ENCODE measurements at regions of chr14 and their contacts with region 1.

Region 1: GRCh38 chr14:52552063-52552988 is at the starts of genes GPR137C and TXNDC16:
- DNase-seq: peak; percentile 94
- ATAC-seq: peak; percentile 91
- H3K4me3 Mint-ChIP-seq: peak within 1 kb of the TSS; percentile 91
- H3K27ac Mint-ChIP-seq: peak within 1 kb of the TSS; percentile 80
- H3K4me1 Mint-ChIP-seq: peaks cover 17% of the 10 kb centered on the region
- H3K27me3 Mint-ChIP-seq: peaks cover 2% of the 10 kb centered on the region
- CTCF ChIP-seq: no peak
- total RNA-seq, gene GPR137C: 0.05 and 0.16 TPM in 2 replicates
- total RNA-seq, gene TXNDC16: 1.9 and 3.9 TPM in 2 replicates

Region 2: DNA sequence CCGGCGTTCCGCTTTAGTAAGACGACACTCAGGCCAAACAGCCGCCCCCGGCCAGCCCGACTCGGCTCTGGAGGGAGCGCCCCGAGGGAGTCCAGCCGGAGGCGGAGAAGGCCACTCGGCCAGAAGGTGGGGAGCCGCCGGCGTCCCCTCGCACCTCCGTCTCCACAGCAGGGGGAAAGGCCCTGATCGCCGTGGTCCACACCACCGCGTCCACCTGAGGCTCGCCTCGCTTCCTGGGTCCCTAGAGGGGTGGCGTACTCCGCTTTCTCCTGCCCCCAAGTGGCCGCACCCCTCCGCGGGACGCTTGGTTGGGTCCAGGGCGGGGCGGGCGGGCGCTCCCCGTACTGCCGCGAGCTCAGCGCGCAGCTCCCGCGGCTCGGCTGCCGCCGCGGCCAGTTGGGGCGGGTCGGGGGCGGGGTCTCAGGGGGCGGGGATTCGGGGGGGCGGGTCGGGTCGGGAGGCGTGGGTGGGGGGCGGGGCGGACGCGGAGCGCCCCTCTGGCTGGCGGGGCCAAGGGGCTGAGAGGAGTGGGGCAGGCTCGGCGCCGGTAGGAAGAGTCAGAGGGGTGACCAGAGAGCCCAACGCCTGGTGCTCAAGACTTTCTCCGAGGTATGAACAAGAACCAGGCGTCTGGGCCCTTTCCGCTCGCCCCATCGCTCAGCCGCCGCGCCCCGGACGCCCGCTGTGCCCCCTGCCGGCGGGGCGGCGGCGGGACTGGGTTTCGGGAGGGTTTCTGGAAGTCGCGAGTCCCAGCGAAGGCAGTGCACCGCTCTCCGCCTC is 900.7 kb before region 1 on chr14 and contains the start of gene FRMD6:
- CTCF ChIA-PET with region 1: no interaction called
- POLR2A ChIA-PET with region 1: no interaction called
- intact Hi-C with region 1: loop called (anchors 1 kb)
- DNase-seq: peak; percentile 71
- ATAC-seq: peak; percentile 80
- H3K4me3 Mint-ChIP-seq: peak within 1 kb of the TSS; percentile 82
- H3K27ac Mint-ChIP-seq: peak within 1 kb of the TSS; percentile 35
- H3K4me1 Mint-ChIP-seq: peaks cover 8% of the 10 kb centered on the region
- H3K27me3 Mint-ChIP-seq: peaks cover 30% of the 10 kb centered on the region
- CTCF ChIP-seq: no peak
- total RNA-seq, gene FRMD6: 0.32 and 0.33 TPM in 2 replicates

Region 3: GRCh38 chr14:52299692-52300278 is 252.5 kb before region 1 on chr14:
- CTCF ChIA-PET with region 1: interaction called, 3 read pairs
- POLR2A ChIA-PET with region 1: no interaction called
- intact Hi-C with region 1: loop called (anchors 1 kb)
- DNase-seq: no peak
- ATAC-seq: no peak
- H3K4me3 Mint-ChIP-seq: no peak overlapping the region
- H3K27ac Mint-ChIP-seq: no peak overlapping the region
- H3K4me1 Mint-ChIP-seq: no peaks in the 10 kb centered on the region
- H3K27me3 Mint-ChIP-seq: peaks cover 10% of the 10 kb centered on the region
- CTCF ChIP-seq: no peak

Region 4: GRCh38 chr14:52706724-52707706 is 154.7 kb after region 1 on chr14 and contains the start of gene PSMC6:
- CTCF ChIA-PET with region 1: no interaction called
- POLR2A ChIA-PET with region 1: interaction called, 3 read pairs
- intact Hi-C with region 1: loop called (anchors 1 kb)
- DNase-seq: peak; percentile 85
- ATAC-seq: peak; percentile 99
- H3K4me3 Mint-ChIP-seq: peak within 1 kb of the TSS; percentile 99
- H3K27ac Mint-ChIP-seq: peak within 1 kb of the TSS; percentile 98
- H3K4me1 Mint-ChIP-seq: peaks cover 25% of the 10 kb centered on the region
- H3K27me3 Mint-ChIP-seq: peaks cover 2% of the 10 kb centered on the region
- CTCF ChIP-seq: no peak
- total RNA-seq, gene PSMC6: 94.8 and 97.6 TPM in 2 replicates

Region 5: DNA sequence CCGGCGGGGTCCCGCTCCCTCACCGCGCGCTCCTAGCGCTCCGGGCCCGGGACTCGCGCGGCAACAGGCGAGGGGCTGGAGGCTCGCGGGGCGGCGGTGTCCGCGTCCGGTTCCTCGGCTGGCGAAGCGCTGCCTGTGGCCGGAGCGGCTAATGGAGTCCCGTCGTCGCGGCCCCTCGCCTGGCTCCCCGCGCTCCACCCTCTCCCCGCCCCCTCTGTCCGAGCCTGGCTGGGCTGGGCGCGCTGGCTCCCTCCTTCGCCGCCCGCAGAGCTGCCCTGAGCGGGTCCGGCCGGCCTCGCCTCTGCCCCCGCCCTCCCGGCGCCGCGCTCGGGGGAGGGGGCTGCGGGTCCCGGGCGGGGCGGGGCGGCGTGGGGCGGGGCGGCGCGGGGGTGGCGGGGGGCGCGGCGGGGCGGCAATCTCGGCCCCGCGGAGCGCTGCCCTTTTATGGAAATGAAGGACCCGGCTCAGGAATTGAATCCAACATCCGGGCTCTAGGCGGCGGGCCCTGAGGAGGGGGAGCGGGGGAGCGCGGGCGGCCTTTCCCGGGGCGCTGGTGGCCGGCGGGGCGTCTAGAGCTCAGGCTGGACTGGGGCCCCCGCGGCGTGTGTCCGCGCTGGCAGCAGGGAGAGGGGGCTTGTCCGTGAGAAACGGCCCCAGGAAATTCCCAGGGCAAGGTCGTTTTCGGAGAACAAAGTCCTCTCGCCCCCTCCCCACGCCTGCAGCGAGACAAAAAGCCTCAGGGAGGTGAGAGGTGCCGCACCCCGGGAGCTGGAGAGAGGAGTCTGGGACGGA is 398.8 kb after region 1 on chr14 and contains the start of gene FERMT2:
- CTCF ChIA-PET with region 1: no interaction called
- POLR2A ChIA-PET with region 1: no interaction called
- intact Hi-C with region 1: loop called (anchors 10 kb)
- DNase-seq: peak; percentile 24
- ATAC-seq: peak; percentile 56
- H3K4me3 Mint-ChIP-seq: peak within 1 kb of the TSS; percentile 84
- H3K27ac Mint-ChIP-seq: no peak within 1 kb of the TSS
- H3K4me1 Mint-ChIP-seq: peaks cover 21% of the 10 kb centered on the region
- H3K27me3 Mint-ChIP-seq: peaks cover 42% of the 10 kb centered on the region
- CTCF ChIP-seq: no peak
- total RNA-seq, gene FERMT2: 0.24 and 0.51 TPM in 2 replicates

Region 6: GRCh38 chr14:54488646-54489317 is 1936.5 kb after region 1 on chr14 and contains the start of gene GMFB:
- CTCF ChIA-PET with region 1: no interaction called
- POLR2A ChIA-PET with region 1: no interaction called
- intact Hi-C with region 1: loop called (anchors 10 kb)
- DNase-seq: peak; percentile 80
- ATAC-seq: peak; percentile 96
- H3K4me3 Mint-ChIP-seq: peak within 1 kb of the TSS; percentile 94
- H3K27ac Mint-ChIP-seq: peak within 1 kb of the TSS; percentile 94
- H3K4me1 Mint-ChIP-seq: peaks cover 66% of the 10 kb centered on the region
- H3K27me3 Mint-ChIP-seq: no peaks in the 10 kb centered on the region
- CTCF ChIP-seq: no peak
- total RNA-seq, gene GMFB: 39.5 and 43.0 TPM in 2 replicates

Measured in activated B cell treated with CpG ODN at 0.5 μM for 24 hours (primary cell).